Sciatic nerve (tissue), 2 donors: ENCODE measurements at regions of chr15 and their contacts with region 1.

Region 1: GRCh38 chr15:83100097-83100646 is 7.3 kb upstream of the TM6SF1 start:
- DNase-seq: no peak
- ATAC-seq: no peak

Region 2: DNA sequence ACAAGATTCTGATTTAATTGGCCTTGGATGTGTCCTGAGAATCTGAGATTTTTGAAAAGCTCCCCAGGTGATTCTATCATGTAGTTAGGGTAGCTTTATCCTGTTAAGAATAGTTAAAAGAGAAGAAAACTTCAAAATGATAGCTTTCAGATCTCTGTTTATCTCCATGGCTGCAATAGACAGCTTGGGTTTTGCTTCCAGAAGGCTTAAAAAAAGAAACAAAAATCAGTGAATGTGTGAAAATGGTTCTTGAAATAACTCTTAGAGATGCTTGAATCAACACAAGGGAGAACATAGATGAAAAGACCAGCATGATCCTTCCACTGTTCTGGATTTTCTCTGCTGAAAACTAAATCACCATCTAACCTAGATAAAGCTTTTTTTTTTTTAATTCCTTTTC is 1665.3 kb before region 1 on chr15:
- intact Hi-C with region 1: loop called (anchors 5 kb)
- DNase-seq: no peak
- ATAC-seq: no peak

Region 3: DNA sequence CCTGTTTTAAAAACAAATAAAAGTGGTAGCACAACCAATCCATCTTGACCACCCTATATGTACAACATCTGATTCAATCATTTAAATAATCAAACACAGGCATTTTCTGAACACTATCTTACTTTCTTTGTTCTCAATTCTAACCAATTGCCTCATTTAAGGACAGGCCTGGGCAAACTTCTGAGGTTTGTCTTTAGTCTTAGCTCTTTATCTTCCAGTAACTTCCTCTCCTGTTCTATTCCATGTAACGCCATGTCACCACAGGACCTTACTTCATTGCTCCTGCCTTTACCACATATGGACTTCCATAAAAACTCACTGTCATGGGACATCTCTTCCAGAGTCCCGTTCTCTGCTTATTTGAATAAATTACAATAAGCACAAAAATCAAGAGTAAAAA is 92.6 kb after region 1 on chr15:
- intact Hi-C with region 1: no loop called
- DNase-seq: no peak
- ATAC-seq: no peak

Region 4: DNA sequence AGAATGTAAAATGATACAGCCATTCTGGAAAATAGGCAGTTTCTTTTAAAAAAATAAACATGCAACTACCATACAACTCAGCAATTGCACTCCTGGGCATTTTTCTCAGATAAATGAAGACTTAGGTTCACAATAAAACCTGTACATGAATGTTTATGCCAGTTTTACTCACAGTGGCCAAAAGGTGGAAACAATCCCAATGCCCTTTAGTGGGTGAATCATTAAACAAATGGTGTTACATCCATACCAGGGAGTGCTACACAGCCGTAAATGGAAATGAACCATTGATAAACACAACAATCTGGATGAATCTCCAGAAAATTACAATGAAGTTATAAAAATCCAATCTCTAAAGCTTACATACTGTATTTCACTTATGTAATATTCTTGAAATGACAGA is 694.0 kb after region 1 on chr15:
- intact Hi-C with region 1: no loop called
- DNase-seq: no peak
- ATAC-seq: no peak